Activated B cell treated with CpG ODN at 0.5 μM for 24 hours (primary cell): ENCODE measurements at regions of chr9 and their contacts with region 1.

Region 1: GRCh38 chr9:37197158-37198038 is 77.0 kb downstream of the ZCCHC7 start:
- DNase-seq: no peak
- ATAC-seq: peak; percentile 72
- H3K4me3 Mint-ChIP-seq: peak overlapping the region; percentile 64
- H3K27ac Mint-ChIP-seq: peak overlapping the region; percentile 91
- H3K4me1 Mint-ChIP-seq: peaks cover 96% of the 10 kb centered on the region
- H3K27me3 Mint-ChIP-seq: no peaks in the 10 kb centered on the region
- CTCF ChIP-seq: no peak

Region 2: GRCh38 chr9:37144762-37145161 is 52.6 kb before region 1 on chr9:
- CTCF ChIA-PET with region 1: no interaction called
- POLR2A ChIA-PET with region 1: no interaction called
- intact Hi-C with region 1: loop called (anchors 2 kb)
- DNase-seq: no peak
- ATAC-seq: peak; percentile 25
- H3K4me3 Mint-ChIP-seq: peak overlapping the region; percentile 20
- H3K27ac Mint-ChIP-seq: peak overlapping the region; percentile 82
- H3K4me1 Mint-ChIP-seq: peaks cover 68% of the 10 kb centered on the region
- H3K27me3 Mint-ChIP-seq: no peaks in the 10 kb centered on the region
- CTCF ChIP-seq: no peak

Region 3: DNA sequence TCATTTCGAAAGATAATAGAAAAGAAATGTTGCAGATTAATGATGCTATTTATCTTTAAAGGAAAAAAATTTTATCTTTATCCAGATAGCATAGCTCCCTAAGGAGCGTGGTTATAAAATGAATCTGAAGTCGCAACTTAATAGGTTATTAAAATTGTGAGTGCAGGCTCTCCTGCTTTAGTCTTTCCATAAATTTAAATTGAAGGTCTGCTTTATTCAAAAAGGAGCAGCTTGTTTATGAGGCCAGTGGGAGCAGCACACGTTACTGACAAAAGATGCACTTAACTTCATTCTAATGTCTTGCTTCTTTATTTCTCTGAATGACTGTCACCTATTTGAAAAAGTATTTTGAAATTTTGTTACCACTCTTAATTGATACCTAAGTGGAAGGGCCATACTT is 18.0 kb after region 1 on chr9:
- CTCF ChIA-PET with region 1: interaction called, 3 read pairs
- POLR2A ChIA-PET with region 1: interaction called, 12 read pairs
- intact Hi-C with region 1: loop called (anchors 1 kb)
- DNase-seq: no peak
- ATAC-seq: no peak
- H3K4me3 Mint-ChIP-seq: no peak overlapping the region
- H3K27ac Mint-ChIP-seq: no peak overlapping the region
- H3K4me1 Mint-ChIP-seq: peaks cover 64% of the 10 kb centered on the region
- H3K27me3 Mint-ChIP-seq: no peaks in the 10 kb centered on the region
- CTCF ChIP-seq: no peak

Region 4: DNA sequence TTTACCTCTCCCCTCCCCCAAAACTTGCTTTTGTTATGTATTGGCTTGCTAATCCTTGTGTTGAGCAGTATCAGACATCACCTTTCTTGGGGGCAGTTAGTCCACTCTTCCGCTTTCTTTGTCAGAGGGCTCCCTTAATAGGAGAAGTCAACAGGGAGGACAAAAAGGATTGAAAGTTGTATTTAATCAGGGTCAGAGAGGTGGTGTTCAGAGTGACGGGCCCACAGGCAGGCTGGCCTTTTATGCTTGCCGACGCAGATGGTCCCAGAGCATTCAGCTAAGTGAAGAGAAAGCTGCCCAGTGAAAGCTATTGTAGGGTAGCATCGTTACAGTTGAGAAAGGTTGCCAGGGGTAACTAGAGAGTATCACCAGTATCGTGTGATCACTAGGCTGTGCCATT is 54.1 kb after region 1 on chr9:
- CTCF ChIA-PET with region 1: no interaction called
- POLR2A ChIA-PET with region 1: interaction called, 7 read pairs
- intact Hi-C with region 1: loop called (anchors 2 kb)
- DNase-seq: peak; percentile 31
- ATAC-seq: peak; percentile 93
- H3K4me3 Mint-ChIP-seq: peak overlapping the region; percentile 45
- H3K27ac Mint-ChIP-seq: peak overlapping the region; percentile 94
- H3K4me1 Mint-ChIP-seq: peaks cover 68% of the 10 kb centered on the region
- H3K27me3 Mint-ChIP-seq: no peaks in the 10 kb centered on the region
- CTCF ChIP-seq: no peak

Region 5: DNA sequence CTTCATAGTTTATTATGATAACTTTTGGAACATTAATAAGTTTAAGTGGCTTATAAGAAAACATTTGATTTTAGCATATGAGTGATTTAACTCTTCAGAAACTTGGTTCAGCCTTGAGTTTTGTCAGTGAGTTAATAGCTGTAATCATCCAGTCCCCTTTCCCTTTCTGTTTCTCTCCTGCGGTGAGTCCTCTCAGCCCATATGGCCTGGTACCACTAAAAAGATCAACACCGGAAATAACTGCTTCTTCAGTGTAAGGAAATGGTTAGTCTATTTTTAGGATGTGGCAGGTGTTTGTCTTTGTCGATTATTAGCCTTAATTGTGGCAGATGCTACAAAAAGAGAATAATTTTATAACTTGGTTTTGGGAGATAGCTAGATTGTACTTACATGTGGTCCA is 104.9 kb after region 1 on chr9:
- CTCF ChIA-PET with region 1: interaction called, 3 read pairs
- POLR2A ChIA-PET with region 1: interaction called, 19 read pairs
- intact Hi-C with region 1: no loop called
- DNase-seq: no peak
- ATAC-seq: peak; percentile 84
- H3K4me3 Mint-ChIP-seq: peak overlapping the region; percentile 73
- H3K27ac Mint-ChIP-seq: peak overlapping the region; percentile 96
- H3K4me1 Mint-ChIP-seq: peaks cover 83% of the 10 kb centered on the region
- H3K27me3 Mint-ChIP-seq: no peaks in the 10 kb centered on the region
- CTCF ChIP-seq: no peak